Endothelial cell of umbilical vein (primary cell): ENCODE measurements at regions of chr3 and their contacts with region 1.

Region 1: GRCh38 chr3:176430244-176431037 is 766.8 kb downstream of the TBL1XR1 start:
- DNase-seq: peak; percentile 40
- H3K4me3 ChIP-seq: no peak overlapping the region
- H3K27ac ChIP-seq: no peak overlapping the region
- H3K4me1 ChIP-seq: no peaks in the 10 kb centered on the region
- H3K27me3 ChIP-seq: peaks cover 0 to 3% of the 10 kb centered on the region in 2 experiments
- CTCF ChIP-seq: peak; percentile 16 to 45
- POLR2A ChIP-seq: no peak

Region 2: DNA sequence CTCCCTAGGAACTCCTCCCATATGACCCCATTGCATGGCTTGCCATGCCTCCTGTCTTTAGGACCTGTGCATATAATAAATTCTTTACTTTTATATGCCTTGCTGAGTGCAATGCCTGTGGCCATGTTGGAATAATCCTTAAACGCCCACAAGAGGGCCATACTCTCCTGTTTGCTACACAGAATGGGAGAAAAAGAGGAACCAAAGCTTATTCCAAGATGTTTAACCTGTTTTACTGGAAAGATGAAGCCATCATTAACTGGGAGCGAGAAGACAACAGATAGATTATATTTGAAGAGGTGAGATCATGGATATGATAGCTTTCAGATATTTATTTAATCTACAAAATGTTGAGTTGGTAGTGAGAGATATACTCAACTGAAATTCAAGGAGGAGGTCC is 473.4 kb before region 1 on chr3:
- CTCF ChIA-PET with region 1: interaction called, 5 read pairs
- POLR2A ChIA-PET with region 1: no interaction called
- dilution Hi-C with region 1: no loop called
- intact Hi-C with region 1: loop called (anchors 5 kb)
- DNase-seq: no peak
- H3K4me3 ChIP-seq: no peak overlapping the region
- H3K27ac ChIP-seq: no peak overlapping the region
- H3K4me1 ChIP-seq: no peaks in the 10 kb centered on the region
- H3K27me3 ChIP-seq: no peaks in the 10 kb centered on the region
- CTCF ChIP-seq: no peak
- POLR2A ChIP-seq: no peak

Region 3: DNA sequence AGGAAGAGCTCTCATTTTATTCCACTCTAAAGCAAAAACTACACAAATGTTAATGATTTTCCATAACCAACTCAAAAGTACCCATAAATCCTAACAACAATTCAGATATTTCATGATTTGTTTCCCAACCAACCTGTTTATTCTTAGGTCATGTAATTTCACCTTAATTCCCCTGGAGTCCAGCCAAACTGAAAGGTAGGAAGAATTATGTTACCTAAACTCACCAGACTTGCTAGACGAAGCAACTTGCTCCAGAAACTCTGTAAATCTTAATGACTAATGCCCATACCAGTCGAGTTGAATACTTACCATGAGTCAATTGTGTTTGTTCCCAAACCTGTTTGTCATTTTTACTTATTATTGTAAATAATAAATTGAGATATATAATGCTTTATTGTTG is 263.2 kb before region 1 on chr3:
- CTCF ChIA-PET with region 1: no interaction called
- POLR2A ChIA-PET with region 1: no interaction called
- dilution Hi-C with region 1: no loop called
- intact Hi-C with region 1: no loop called
- DNase-seq: no peak
- H3K4me3 ChIP-seq: no peak overlapping the region
- H3K27ac ChIP-seq: no peak overlapping the region
- H3K4me1 ChIP-seq: no peaks in the 10 kb centered on the region
- H3K27me3 ChIP-seq: no peaks in the 10 kb centered on the region
- CTCF ChIP-seq: no peak
- POLR2A ChIP-seq: no peak

Region 4: GRCh38 chr3:176416870-176417269 is 13.6 kb before region 1 on chr3:
- CTCF ChIA-PET with region 1: interaction called, 15 read pairs
- POLR2A ChIA-PET with region 1: no interaction called
- dilution Hi-C with region 1: no loop called
- intact Hi-C with region 1: no loop called
- DNase-seq: no peak
- H3K4me3 ChIP-seq: no peak overlapping the region
- H3K27ac ChIP-seq: no peak overlapping the region
- H3K4me1 ChIP-seq: no peaks in the 10 kb centered on the region
- H3K27me3 ChIP-seq: no peaks in the 10 kb centered on the region
- CTCF ChIP-seq: no peak
- POLR2A ChIP-seq: no peak

Region 5: GRCh38 chr3:176505878-176506621 is 75.6 kb after region 1 on chr3:
- CTCF ChIA-PET with region 1: no interaction called
- POLR2A ChIA-PET with region 1: no interaction called
- dilution Hi-C with region 1: no loop called
- intact Hi-C with region 1: no loop called
- DNase-seq: no peak
- H3K4me3 ChIP-seq: no peak overlapping the region
- H3K27ac ChIP-seq: no peak overlapping the region
- H3K4me1 ChIP-seq: no peaks in the 10 kb centered on the region
- H3K27me3 ChIP-seq: no peaks in the 10 kb centered on the region
- CTCF ChIP-seq: no peak
- POLR2A ChIP-seq: no peak

Region 6: DNA sequence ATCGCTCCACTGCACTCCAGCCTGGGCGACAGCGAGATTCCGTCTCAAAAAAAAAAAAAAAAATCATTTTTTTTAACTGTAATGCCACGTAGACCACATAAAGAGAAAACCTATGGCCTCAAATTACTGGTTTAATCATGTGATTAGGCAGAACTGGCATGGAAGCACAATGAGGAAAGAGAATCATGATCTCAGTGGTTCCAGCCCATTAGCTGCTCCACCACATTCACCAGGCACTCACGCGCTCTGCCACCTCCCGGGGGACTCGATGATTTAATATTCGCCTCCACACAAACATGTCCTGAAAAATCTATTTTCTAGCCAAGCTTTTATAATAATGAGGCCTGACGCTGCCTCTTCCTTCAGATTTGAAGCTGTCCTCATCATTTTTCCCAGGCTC is 562.1 kb after region 1 on chr3:
- CTCF ChIA-PET with region 1: no interaction called
- POLR2A ChIA-PET with region 1: no interaction called
- dilution Hi-C with region 1: no loop called
- intact Hi-C with region 1: no loop called
- DNase-seq: no peak
- H3K4me3 ChIP-seq: no peak overlapping the region
- H3K27ac ChIP-seq: no peak overlapping the region
- H3K4me1 ChIP-seq: no peaks in the 10 kb centered on the region
- H3K27me3 ChIP-seq: no peaks in the 10 kb centered on the region
- CTCF ChIP-seq: no peak
- POLR2A ChIP-seq: no peak